ENCODE measurements at regions of chr17 and their contacts with region 1.

Region 1: GRCh38 chr17:34474706-34475105 is 104.7 kb upstream of the TMEM132E start:
- DNase-seq: no peak
- ATAC-seq: no peak
- H3K4me3 ChIP-seq: no peak overlapping the region
- H3K27ac ChIP-seq: no peak overlapping the region
- H3K4me1 ChIP-seq: no peaks in the 10 kb centered on the region
- H3K27me3 ChIP-seq: peaks cover 0 to 17% (median 12%) of the 10 kb centered on the region in 7 donors
- CTCF ChIP-seq: no peak

Region 2: GRCh38 chr17:34434052-34434451 is 40.7 kb before region 1 on chr17:
- intact Hi-C with region 1: no loop called
- DNase-seq: no peak
- ATAC-seq: peak in 5 of 8 donors; percentile 43 to 75 (median 51)
- H3K4me3 ChIP-seq: no peak overlapping the region
- H3K27ac ChIP-seq: peak overlapping the region in 1 of 10 donors; percentile 38
- H3K4me1 ChIP-seq: peaks cover 0 to 16% (median 0%) of the 10 kb centered on the region in 9 donors
- H3K27me3 ChIP-seq: peaks cover 0 to 29% (median 7%) of the 10 kb centered on the region in 7 donors
- CTCF ChIP-seq: no peak

Region 3: DNA sequence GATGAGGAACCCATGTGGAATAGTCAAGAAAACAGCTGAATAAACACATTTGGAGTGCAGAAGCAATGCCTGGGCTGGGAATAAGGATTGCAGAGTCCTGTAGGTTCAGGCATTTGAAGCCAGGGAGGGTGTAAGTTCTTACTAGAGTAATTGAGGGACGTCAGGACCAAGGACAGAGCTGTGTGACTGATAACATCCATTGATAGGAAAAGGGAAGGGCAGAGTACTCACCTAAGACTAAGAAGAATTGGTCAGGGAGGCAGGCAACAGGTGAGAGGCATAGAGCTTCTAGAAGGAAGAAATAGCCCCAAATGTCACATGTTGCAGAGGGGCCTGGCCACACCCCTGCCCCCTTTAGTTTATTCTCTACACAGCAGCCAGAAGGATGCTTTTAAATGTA is 24.9 kb after region 1 on chr17:
- intact Hi-C with region 1: no loop called
- DNase-seq: no peak
- ATAC-seq: no peak
- H3K4me3 ChIP-seq: no peak overlapping the region
- H3K27ac ChIP-seq: no peak overlapping the region
- H3K4me1 ChIP-seq: peaks cover 0 to 22% (median 16%) of the 10 kb centered on the region in 9 donors
- H3K27me3 ChIP-seq: peaks cover 0 to 36% (median 8%) of the 10 kb centered on the region in 7 donors
- CTCF ChIP-seq: no peak

Region 4: DNA sequence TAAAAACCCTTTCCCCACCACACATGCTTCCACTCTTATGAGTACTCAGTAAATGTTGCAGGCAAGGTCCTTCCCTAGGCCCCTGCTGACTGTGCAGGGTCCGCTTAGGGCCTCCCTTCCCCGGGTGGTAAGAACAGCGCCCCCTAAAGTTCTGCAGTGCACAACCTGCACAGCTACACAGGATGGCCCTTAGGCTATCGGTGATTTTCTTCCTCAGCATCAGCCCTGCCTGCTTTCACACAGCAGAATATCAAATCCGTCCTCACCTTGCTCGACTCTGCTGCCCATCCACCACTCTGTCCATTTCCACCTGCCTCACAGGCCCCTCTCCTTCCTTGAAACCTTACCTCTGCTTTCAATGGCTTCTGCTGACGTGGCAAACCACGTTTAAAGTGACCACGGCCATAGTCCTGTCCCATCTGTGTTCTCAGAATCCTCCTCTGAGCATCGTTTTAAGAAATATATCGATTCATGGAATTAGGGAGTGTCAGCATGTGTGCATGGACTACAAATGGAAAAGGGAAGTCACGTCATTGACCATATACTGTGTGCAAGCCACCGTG is 53.3 kb after region 1 on chr17:
- intact Hi-C with region 1: loop called in 1 of 10 experiments (anchors 10 kb)
- DNase-seq: no peak
- ATAC-seq: no peak
- H3K4me3 ChIP-seq: no peak overlapping the region
- H3K27ac ChIP-seq: no peak overlapping the region
- H3K4me1 ChIP-seq: no peaks in the 10 kb centered on the region
- H3K27me3 ChIP-seq: peaks cover 0 to 83% (median 66%) of the 10 kb centered on the region in 7 donors
- CTCF ChIP-seq: no peak

Region 5: DNA sequence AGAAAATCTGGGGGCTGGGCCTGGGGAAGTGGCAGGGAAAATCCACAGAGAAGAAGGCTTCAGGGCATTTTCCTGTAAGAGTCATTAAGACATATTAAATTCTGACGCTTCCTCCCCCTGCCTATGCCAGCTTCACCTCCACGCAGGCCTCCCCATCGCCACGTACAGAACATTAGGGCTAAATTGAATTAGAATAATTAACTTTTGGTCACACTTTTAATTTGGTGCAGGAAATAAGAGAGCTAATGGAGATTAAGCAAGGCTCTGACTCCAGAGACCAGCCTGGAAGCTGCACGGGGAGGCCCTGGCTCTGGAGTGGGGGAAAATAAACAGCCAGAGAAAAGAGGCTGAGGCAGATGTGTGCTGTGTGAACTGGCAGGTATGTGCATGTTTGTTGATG is 338.6 kb after region 1 on chr17:
- intact Hi-C with region 1: no loop called
- DNase-seq: no peak
- ATAC-seq: no peak
- H3K4me3 ChIP-seq: no peak overlapping the region
- H3K27ac ChIP-seq: no peak overlapping the region
- H3K4me1 ChIP-seq: no peaks in the 10 kb centered on the region
- H3K27me3 ChIP-seq: peaks cover 0 to 11% (median 0%) of the 10 kb centered on the region in 7 donors
- CTCF ChIP-seq: no peak